Natural killer cell (primary cell): ENCODE measurements at regions of chr9 and their contacts with region 1.

Region 1: DNA sequence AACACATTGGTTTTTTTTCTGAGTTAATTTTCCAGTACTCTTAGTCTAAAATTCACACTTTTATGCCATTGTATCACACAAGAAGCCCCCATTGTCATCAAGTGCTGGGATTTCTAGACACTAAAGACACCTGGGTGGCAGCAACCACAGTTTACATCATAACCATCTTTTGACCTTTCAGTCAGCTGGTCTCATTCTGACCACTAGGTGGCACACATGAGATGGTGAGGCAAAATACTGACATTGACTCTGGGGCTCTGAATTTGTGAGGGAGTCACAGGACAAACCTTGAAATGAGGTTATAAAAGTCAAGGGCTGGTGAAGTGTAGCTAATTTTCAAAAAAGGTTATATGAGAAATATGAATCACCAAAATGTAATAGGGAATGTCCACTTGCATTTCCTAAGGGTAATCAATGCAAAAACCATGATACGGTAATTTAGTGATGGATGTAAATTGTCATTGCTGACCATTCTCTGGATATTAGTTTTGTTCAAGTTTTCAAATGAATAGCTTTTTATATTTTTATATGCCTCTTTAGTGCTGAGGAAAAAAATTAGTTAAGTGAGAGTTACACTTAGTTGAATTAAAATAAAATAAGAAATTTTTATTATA is 229.4 kb downstream of the DMAC1 start:
- DNase-seq: peak; percentile 25 to 83
- ATAC-seq: peak; percentile 69 to 88 (median 73)
- H3K4me3 ChIP-seq: no peak overlapping the region
- H3K4me3 Mint-ChIP-seq: no peak overlapping the region
- H3K27ac ChIP-seq: no peak overlapping the region
- H3K27ac Mint-ChIP-seq: no peak overlapping the region
- H3K4me1 ChIP-seq: no peaks in the 10 kb centered on the region
- H3K4me1 Mint-ChIP-seq: peaks cover 0 to 3% of the 10 kb centered on the region in 2 donors
- H3K27me3 ChIP-seq: no peaks in the 10 kb centered on the region
- H3K27me3 Mint-ChIP-seq: peaks cover 11 to 38% of the 10 kb centered on the region in 2 donors
- CTCF ChIP-seq: peak; percentile 93

Region 2: GRCh38 chr9:7510199-7510598 is 60.0 kb before region 1 on chr9:
- intact Hi-C with region 1: loop called (anchors 10 kb)
- DNase-seq: no peak
- ATAC-seq: no peak
- H3K4me3 ChIP-seq: no peak overlapping the region
- H3K4me3 Mint-ChIP-seq: no peak overlapping the region
- H3K27ac ChIP-seq: no peak overlapping the region
- H3K27ac Mint-ChIP-seq: no peak overlapping the region
- H3K4me1 ChIP-seq: no peaks in the 10 kb centered on the region
- H3K4me1 Mint-ChIP-seq: no peaks in the 10 kb centered on the region
- H3K27me3 ChIP-seq: no peaks in the 10 kb centered on the region
- H3K27me3 Mint-ChIP-seq: peaks cover 6 to 19% of the 10 kb centered on the region in 2 donors
- CTCF ChIP-seq: no peak

Region 3: GRCh38 chr9:7613931-7614330 is 43.7 kb after region 1 on chr9:
- intact Hi-C with region 1: no loop called
- DNase-seq: peak in 1 of 2 donors; percentile 56
- ATAC-seq: peak in 1 of 3 donors; percentile 70
- H3K4me3 ChIP-seq: no peak overlapping the region
- H3K4me3 Mint-ChIP-seq: peak overlapping the region; percentile 79
- H3K27ac ChIP-seq: no peak overlapping the region
- H3K27ac Mint-ChIP-seq: peak overlapping the region; percentile 6 to 62
- H3K4me1 ChIP-seq: no peaks in the 10 kb centered on the region
- H3K4me1 Mint-ChIP-seq: peaks cover 17 to 25% of the 10 kb centered on the region in 2 donors
- H3K27me3 ChIP-seq: no peaks in the 10 kb centered on the region
- H3K27me3 Mint-ChIP-seq: peaks cover 0 to 6% of the 10 kb centered on the region in 2 donors
- CTCF ChIP-seq: no peak